Natural killer cell (primary cell): ENCODE measurements at regions of chr1 and their contacts with region 1.

Region 1: GRCh38 chr1:68442822-68443556 is 6.8 kb downstream of the RPE65 start:
- DNase-seq: no peak
- ATAC-seq: no peak
- H3K4me3 ChIP-seq: no peak overlapping the region
- H3K4me3 Mint-ChIP-seq: no peak overlapping the region
- H3K27ac ChIP-seq: no peak overlapping the region
- H3K27ac Mint-ChIP-seq: no peak overlapping the region
- H3K4me1 ChIP-seq: no peaks in the 10 kb centered on the region
- H3K4me1 Mint-ChIP-seq: no peaks in the 10 kb centered on the region
- H3K27me3 ChIP-seq: no peaks in the 10 kb centered on the region
- H3K27me3 Mint-ChIP-seq: peaks cover 0 to 5% of the 10 kb centered on the region in 2 donors
- CTCF ChIP-seq: no peak

Region 2: DNA sequence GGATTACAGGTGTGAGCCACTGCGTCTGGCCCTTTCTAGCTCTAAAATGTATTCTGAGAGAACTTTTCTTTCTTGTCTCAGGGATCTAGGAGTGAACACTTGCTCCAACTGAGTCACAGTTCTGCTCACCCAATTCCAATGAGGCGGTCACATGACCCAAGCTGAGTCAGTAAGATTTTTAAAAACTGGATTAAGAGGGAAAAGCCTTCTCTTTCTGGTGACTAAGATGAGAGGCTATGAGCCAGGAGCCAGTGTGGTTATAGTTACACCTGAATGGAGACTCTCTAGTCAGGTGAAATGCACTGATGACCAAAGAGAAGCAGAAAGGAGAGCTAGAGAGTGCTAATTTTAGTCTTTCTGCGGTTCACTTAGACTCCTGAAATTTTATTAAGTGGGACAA is 63.4 kb after region 1 on chr1:
- intact Hi-C with region 1: loop called (anchors 10 kb)
- DNase-seq: no peak
- ATAC-seq: no peak
- H3K4me3 ChIP-seq: no peak overlapping the region
- H3K4me3 Mint-ChIP-seq: no peak overlapping the region
- H3K27ac ChIP-seq: no peak overlapping the region
- H3K27ac Mint-ChIP-seq: no peak overlapping the region
- H3K4me1 ChIP-seq: no peaks in the 10 kb centered on the region
- H3K4me1 Mint-ChIP-seq: peaks cover 0 to 7% of the 10 kb centered on the region in 2 donors
- H3K27me3 ChIP-seq: no peaks in the 10 kb centered on the region
- H3K27me3 Mint-ChIP-seq: peaks cover 0 to 4% of the 10 kb centered on the region in 2 donors
- CTCF ChIP-seq: no peak